ENCODE measurements at regions of chr22 and their contacts with region 1.

Region 1: DNA sequence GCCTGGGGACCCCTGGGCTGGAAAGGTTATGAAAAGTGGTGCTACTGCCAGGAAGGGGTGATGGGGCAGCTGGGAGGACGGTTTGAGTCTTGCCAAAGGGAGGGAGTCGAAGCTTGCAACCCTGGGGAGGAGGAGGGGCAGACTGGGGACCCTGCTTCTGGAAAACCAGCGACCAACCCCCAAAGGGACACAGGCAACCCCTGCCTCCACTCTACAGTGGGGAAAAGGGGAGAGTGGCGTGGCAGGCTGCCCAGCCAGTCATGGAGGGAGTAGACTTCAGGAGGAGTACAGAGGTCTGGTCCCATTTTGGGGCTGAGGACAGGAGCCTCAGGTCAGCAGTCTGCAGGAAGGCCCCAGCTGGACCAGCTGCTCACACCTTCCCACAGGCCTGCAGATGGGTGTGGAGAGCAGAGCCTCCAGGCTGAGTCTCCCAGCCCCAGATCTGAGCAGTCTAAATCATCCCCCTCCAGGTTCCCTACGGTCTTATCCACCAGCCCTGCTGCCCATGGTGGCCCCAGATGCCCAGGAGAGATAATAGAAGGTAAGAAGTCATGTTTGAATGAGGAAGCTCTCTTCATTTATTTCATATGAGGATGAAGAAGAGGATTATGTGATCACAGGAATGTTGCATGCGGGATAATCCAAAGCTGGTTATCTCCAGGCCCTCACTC is 3.3 kb downstream of the DDT start:
- DNase-seq: no peak
- ATAC-seq: no peak

Region 2: GRCh38 chr22:23925020-23925606 is 45.8 kb before region 1 on chr22:
- intact Hi-C with region 1: loop called (anchors 5 kb)
- DNase-seq: no peak
- ATAC-seq: no peak

Region 3: GRCh38 chr22:23938328-23939016 is 32.5 kb before region 1 on chr22:
- intact Hi-C with region 1: loop called in 1 of 2 experiments (anchors 5 kb)
- DNase-seq: no peak
- ATAC-seq: no peak